Ovary (tissue), 10 donors: ENCODE measurements at regions of chr1 and their contacts with region 1.

Region 1: DNA sequence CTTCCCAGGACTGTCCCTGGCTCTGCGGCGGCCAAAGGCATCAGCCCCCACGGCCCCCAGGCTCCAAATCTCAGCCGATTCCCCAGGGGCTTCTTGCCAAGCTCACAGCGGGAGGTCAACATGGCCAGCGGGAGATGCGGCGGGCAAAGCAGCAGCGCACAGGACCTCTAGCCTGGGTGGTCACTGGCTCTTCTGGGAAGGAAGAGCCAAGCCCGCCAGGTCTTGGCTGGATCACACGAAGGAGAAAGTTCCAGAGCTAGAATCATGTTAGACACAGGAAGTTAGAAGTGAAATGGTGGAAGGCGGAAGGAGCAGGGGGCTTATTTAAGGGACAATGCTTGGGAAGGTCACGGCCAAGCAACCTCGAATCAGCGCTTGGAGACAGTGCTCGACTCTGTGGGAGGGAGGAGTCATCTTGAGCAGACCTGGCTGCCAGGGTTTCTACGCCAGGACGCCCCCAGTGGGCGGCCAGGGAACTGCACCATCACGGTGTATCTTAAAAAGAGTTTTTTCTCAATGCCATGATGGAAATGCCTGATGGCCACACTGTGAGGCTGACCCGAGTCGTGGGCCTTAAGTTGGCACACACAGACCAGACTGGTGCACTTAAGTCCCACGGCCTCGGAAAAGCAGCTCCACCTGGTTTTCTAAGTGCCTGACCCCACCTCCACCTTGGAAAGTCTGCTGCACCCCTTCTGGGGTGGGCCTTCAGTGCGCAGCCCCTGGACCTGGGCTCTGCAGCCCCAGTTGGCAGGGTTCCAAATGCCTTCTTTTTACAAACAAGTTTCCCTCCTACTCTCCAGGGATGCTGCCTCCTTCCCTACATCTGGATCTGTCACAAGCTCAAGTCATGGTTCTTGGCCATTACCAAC is 29.3 kb downstream of the SLC66A1 start:
- DNase-seq: peak; percentile 67 to 88 (median 83)
- H3K4me3 ChIP-seq: no peak overlapping the region
- H3K27ac ChIP-seq: peak overlapping the region in 1 of 2 donors; percentile 61
- H3K4me1 ChIP-seq: peaks cover 12% of the 10 kb centered on the region
- H3K27me3 ChIP-seq: no peaks in the 10 kb centered on the region
- CTCF ChIP-seq: peak; percentile 77 to 79 (median 79)
- EP300 ChIP-seq: no peak
- POLR2A ChIP-seq: no peak

Region 2: DNA sequence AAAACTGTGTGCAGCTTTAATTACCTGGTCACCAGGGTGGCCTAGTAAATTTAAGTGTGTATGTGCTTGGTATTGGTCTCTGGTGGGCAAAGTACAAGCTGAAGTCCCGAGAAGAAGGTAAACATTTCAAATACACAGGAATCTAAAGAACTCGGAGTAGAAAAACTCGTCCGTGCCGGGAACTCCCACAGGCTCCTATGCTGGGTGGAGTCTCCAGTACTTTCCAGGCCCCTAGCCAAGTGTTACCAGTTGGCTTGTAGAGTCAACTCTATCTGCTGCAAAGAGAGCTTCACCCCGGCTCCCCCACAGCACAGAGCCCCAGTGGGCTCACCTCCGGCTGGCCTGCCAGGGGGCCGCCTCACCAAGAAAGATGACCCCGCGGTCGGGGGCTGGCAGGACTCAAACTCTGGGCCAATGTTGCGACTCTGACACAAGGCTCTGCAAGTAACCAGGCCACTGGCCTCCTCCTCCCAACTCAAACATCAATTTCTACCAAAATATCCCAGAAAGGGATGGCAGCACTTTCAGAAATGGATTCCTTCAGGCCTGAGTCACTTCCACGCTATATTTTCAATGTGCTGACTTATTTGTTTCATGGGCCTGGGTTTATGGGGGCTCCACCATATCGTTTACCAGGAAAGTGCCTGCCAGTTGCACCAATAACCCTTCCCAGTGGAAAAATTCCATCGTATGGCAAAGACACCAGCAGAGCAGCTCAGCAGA is 44.6 kb after region 1 on chr1:
- intact Hi-C with region 1: loop called in 1 of 4 experiments (anchors 5 kb)
- DNase-seq: peak; percentile 67 to 80 (median 76)
- H3K4me3 ChIP-seq: no peak overlapping the region
- H3K27ac ChIP-seq: peak overlapping the region; percentile 8 to 65
- H3K4me1 ChIP-seq: peaks cover 33% of the 10 kb centered on the region
- H3K27me3 ChIP-seq: no peaks in the 10 kb centered on the region
- CTCF ChIP-seq: no peak
- EP300 ChIP-seq: no peak
- POLR2A ChIP-seq: no peak

Region 3: GRCh38 chr1:19651141-19651737 is 309.8 kb after region 1 on chr1:
- intact Hi-C with region 1: loop called (anchors 5 kb)
- DNase-seq: peak; percentile 63 to 79 (median 75)
- H3K4me3 ChIP-seq: peak overlapping the region; percentile 3
- H3K27ac ChIP-seq: peak overlapping the region; percentile 50 to 80
- H3K4me1 ChIP-seq: peaks cover 42% of the 10 kb centered on the region
- H3K27me3 ChIP-seq: no peaks in the 10 kb centered on the region
- CTCF ChIP-seq: peak in 2 of 3 donors; percentile 61 to 76
- EP300 ChIP-seq: no peak
- POLR2A ChIP-seq: no peak

Region 4: GRCh38 chr1:19661721-19662228 is 320.3 kb after region 1 on chr1:
- intact Hi-C with region 1: loop called in 1 of 4 experiments (anchors 5 kb)
- DNase-seq: peak in 1 of 5 donors; percentile 47
- H3K4me3 ChIP-seq: no peak overlapping the region
- H3K27ac ChIP-seq: no peak overlapping the region
- H3K4me1 ChIP-seq: peaks cover 3% of the 10 kb centered on the region
- H3K27me3 ChIP-seq: peaks cover 3% of the 10 kb centered on the region
- CTCF ChIP-seq: peak; percentile 49 to 68 (median 65)
- EP300 ChIP-seq: no peak
- POLR2A ChIP-seq: no peak